ENCODE measurements at regions of chr18 and their contacts with region 1.

Region 1: GRCh38 chr18:3129053-3129864 is 90.5 kb downstream of the MYOM1 start:
- DNase-seq: peak; percentile 59
- ATAC-seq: peak; percentile 99
- H3K4me3 Mint-ChIP-seq: no peak overlapping the region
- H3K27ac Mint-ChIP-seq: no peak overlapping the region
- H3K4me1 Mint-ChIP-seq: peaks cover 6% of the 10 kb centered on the region
- H3K27me3 Mint-ChIP-seq: no peaks in the 10 kb centered on the region
- CTCF ChIP-seq: peak; percentile 16

Region 2: DNA sequence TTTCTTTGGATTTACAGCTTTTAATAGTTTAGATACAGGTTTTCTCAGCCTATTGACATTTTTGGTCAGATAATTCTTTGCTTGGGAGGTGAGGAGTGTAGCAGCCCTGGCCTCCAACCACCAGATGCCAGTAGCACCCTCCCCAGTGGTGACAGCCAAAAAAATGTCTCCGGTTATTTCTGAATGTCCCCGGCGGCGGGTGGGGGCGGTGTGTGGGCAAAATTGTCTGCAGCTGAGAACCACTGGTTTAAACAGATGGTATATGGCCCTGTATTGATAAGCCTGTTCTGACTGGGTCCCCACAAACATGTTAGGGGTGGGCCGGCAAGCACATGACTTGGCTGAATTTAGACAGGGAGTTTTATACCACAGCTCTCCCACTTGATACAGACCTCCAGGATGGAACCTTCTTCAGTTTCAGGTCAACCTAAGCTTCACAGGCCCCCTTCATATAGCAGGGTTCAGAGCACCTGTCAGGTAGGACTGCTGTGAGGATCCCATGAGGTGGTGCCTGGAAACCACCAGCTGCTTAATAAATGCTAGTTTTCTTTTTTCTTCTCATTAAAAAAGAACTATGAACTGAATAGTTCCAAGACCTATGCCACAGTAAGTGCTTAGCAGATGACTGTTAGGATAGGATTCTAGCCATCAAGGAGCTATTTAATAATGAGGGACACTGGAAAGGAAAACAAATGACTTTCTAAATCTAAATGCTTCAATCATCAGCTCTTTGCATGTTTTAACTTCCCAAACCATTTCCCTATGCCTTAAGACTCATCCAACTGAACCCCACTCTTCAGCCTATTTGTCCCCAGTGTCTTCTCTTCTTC is 134.4 kb before region 1 on chr18:
- CTCF ChIA-PET with region 1: interaction called, 40 read pairs
- POLR2A ChIA-PET with region 1: no interaction called
- intact Hi-C with region 1: loop called (anchors 1 kb)
- DNase-seq: peak; percentile 47
- ATAC-seq: peak; percentile 97
- H3K4me3 Mint-ChIP-seq: peak overlapping the region; percentile 48
- H3K27ac Mint-ChIP-seq: peak overlapping the region; percentile 50
- H3K4me1 Mint-ChIP-seq: peaks cover 34% of the 10 kb centered on the region
- H3K27me3 Mint-ChIP-seq: no peaks in the 10 kb centered on the region
- CTCF ChIP-seq: no peak

Region 3: DNA sequence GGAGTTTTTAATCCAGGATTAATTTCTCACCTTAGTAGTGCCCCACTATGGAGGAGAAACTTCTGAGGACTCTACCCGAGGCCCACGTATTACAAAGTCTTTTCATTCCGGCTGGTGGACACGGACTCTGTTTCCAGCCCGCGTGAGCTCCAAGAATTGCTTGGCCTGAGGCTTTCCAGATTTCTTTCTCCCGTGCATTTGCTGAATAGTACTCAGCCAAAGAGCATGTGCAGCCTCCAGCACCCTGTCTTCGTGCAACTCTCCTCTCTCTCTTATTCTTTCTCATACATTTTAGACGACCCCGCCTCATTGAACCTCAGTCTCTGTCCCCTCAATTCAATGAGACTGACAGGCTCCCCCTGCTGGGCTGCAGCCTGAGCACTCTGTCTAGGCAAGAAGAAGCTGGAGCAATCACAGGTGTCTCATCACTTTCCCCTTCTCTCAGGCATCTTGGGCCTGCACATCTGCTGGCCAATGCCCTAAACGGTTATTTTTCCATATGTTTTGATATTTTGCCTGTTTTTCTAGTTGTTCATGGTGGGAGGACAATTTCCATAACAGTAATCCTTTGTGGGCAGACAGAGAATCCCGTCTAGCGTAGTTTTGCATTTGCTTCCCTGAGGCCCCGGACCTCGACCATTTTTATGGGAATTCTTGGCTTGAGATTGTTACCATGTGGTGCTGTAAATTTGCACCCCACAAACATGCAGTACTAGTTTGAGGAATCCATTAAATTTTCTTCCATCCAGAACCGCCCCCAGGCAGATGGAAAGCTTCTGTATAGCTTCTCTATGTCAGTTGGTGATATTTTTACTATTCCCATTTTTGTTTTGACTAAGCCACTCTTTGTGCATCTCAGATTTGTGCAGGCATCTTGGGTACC is 66.2 kb before region 1 on chr18:
- CTCF ChIA-PET with region 1: interaction called, 15 read pairs
- POLR2A ChIA-PET with region 1: no interaction called
- intact Hi-C with region 1: no loop called
- DNase-seq: peak; percentile 29
- ATAC-seq: peak; percentile 59
- H3K4me3 Mint-ChIP-seq: no peak overlapping the region
- H3K27ac Mint-ChIP-seq: no peak overlapping the region
- H3K4me1 Mint-ChIP-seq: peaks cover 49% of the 10 kb centered on the region
- H3K27me3 Mint-ChIP-seq: no peaks in the 10 kb centered on the region
- CTCF ChIP-seq: no peak

Region 4: GRCh38 chr18:3117493-3118192 is 11.6 kb before region 1 on chr18:
- CTCF ChIA-PET with region 1: interaction called, 12 read pairs
- POLR2A ChIA-PET with region 1: no interaction called
- intact Hi-C with region 1: no loop called
- DNase-seq: no peak
- ATAC-seq: no peak
- H3K4me3 Mint-ChIP-seq: no peak overlapping the region
- H3K27ac Mint-ChIP-seq: no peak overlapping the region
- H3K4me1 Mint-ChIP-seq: no peaks in the 10 kb centered on the region
- H3K27me3 Mint-ChIP-seq: peaks cover 2% of the 10 kb centered on the region
- CTCF ChIP-seq: no peak

Measured in activated B cell treated with CpG ODN at 0.5 μM for 24 hours (primary cell).